ENCODE measurements at regions of chr3 and their contacts with region 1.

Region 1: GRCh38 chr3:57007513-57008460 is 52.7 kb upstream of the SPATA12 start:
- DNase-seq: peak; percentile 88
- H3K4me3 Mint-ChIP-seq: peak overlapping the region; percentile 46
- H3K27ac Mint-ChIP-seq: peak overlapping the region; percentile 88
- H3K4me1 Mint-ChIP-seq: peaks cover 19% of the 10 kb centered on the region
- H3K27me3 Mint-ChIP-seq: no peaks in the 10 kb centered on the region
- CTCF ChIP-seq: no peak

Region 2: DNA sequence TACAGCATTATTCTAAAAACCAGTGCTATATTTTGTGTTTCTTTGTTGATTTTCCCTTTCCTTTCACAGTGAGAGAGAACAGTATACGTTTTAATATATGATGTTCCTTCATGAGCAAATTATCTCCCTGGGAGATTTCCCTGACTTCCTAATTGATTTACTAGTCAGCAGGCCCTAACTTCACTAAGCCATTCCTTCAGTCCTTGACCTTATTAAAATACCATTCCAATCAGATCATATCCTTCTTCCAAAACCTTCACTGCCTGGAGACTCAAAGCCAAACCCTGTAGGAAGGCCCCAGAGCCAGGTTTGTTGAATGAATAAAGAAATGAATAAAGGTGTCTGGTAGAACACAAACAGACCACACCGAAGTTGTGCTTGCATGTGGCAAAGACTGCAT is 162.3 kb before region 1 on chr3:
- CTCF ChIA-PET with region 1: no interaction called
- POLR2A ChIA-PET with region 1: no interaction called
- intact Hi-C with region 1: no loop called
- DNase-seq: no peak
- H3K4me3 Mint-ChIP-seq: no peak overlapping the region
- H3K27ac Mint-ChIP-seq: no peak overlapping the region
- H3K4me1 Mint-ChIP-seq: peaks cover 3% of the 10 kb centered on the region
- H3K27me3 Mint-ChIP-seq: no peaks in the 10 kb centered on the region
- CTCF ChIP-seq: no peak

Region 3: GRCh38 chr3:56997675-56998074 is 10.1 kb before region 1 on chr3:
- CTCF ChIA-PET with region 1: interaction called, 74 read pairs
- POLR2A ChIA-PET with region 1: interaction called, 4 read pairs
- intact Hi-C with region 1: no loop called
- DNase-seq: no peak
- H3K4me3 Mint-ChIP-seq: no peak overlapping the region
- H3K27ac Mint-ChIP-seq: no peak overlapping the region
- H3K4me1 Mint-ChIP-seq: no peaks in the 10 kb centered on the region
- H3K27me3 Mint-ChIP-seq: no peaks in the 10 kb centered on the region
- CTCF ChIP-seq: no peak

Region 4: GRCh38 chr3:57068437-57069089 is 60.8 kb after region 1 on chr3:
- CTCF ChIA-PET with region 1: interaction called, 4 read pairs
- POLR2A ChIA-PET with region 1: interaction called, 22 read pairs
- intact Hi-C with region 1: no loop called
- DNase-seq: peak; percentile 93
- H3K4me3 Mint-ChIP-seq: peak overlapping the region; percentile 66
- H3K27ac Mint-ChIP-seq: peak overlapping the region; percentile 88
- H3K4me1 Mint-ChIP-seq: peaks cover 16% of the 10 kb centered on the region
- H3K27me3 Mint-ChIP-seq: no peaks in the 10 kb centered on the region
- CTCF ChIP-seq: no peak

Region 5: DNA sequence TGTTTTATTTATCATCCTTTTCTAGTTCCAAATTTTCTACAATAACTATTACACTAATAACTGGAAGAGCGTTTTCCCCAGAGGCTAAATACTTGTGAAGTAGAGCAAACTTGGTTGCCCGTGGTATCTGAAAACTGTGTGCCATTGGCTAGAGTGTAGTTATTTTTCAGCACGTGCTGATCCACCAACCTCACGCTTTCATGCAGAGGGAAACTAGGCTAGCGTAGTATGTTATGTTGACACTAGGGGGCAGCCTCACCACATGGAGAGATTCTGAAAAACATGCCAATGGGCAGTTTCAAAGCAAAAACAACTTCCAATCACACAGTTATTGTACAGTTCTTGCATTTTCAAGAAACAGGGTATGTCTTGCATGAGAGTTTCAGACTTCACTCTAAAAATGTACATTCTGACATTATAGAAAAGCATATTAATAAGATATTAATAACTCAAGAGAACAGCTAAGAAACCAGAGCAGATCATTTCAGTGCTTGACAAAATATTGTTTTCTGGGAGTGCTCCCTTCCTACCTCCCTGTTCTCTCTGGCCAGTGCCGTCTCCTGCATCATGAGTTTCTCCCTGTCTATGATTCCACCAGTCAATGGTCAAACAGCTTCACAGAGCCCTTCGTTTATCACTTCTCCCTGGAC is 92.4 kb after region 1 on chr3:
- CTCF ChIA-PET with region 1: interaction called, 13 read pairs
- POLR2A ChIA-PET with region 1: no interaction called
- intact Hi-C with region 1: no loop called
- DNase-seq: peak; percentile 83
- H3K4me3 Mint-ChIP-seq: no peak overlapping the region
- H3K27ac Mint-ChIP-seq: no peak overlapping the region
- H3K4me1 Mint-ChIP-seq: no peaks in the 10 kb centered on the region
- H3K27me3 Mint-ChIP-seq: no peaks in the 10 kb centered on the region
- CTCF ChIP-seq: peak; percentile 82

Region 6: GRCh38 chr3:57221883-57222282 is 214.1 kb after region 1 on chr3:
- CTCF ChIA-PET with region 1: interaction called, 10 read pairs
- POLR2A ChIA-PET with region 1: interaction called, 13 read pairs
- intact Hi-C with region 1: loop called (anchors 5 kb)
- DNase-seq: peak; percentile 39
- H3K4me3 Mint-ChIP-seq: no peak overlapping the region
- H3K27ac Mint-ChIP-seq: no peak overlapping the region
- H3K4me1 Mint-ChIP-seq: peaks cover 5% of the 10 kb centered on the region
- H3K27me3 Mint-ChIP-seq: no peaks in the 10 kb centered on the region
- CTCF ChIP-seq: peak; percentile 40

Region 7: GRCh38 chr3:57234613-57235575 is 227.1 kb after region 1 on chr3:
- CTCF ChIA-PET with region 1: no interaction called
- POLR2A ChIA-PET with region 1: no interaction called
- intact Hi-C with region 1: no loop called
- DNase-seq: no peak
- H3K4me3 Mint-ChIP-seq: no peak overlapping the region
- H3K27ac Mint-ChIP-seq: no peak overlapping the region
- H3K4me1 Mint-ChIP-seq: no peaks in the 10 kb centered on the region
- H3K27me3 Mint-ChIP-seq: no peaks in the 10 kb centered on the region
- CTCF ChIP-seq: no peak

Measured in MCF 10A (cell line).